GM23248 (cell line): ENCODE measurements at regions of chr17 and their contacts with region 1.

Region 1: DNA sequence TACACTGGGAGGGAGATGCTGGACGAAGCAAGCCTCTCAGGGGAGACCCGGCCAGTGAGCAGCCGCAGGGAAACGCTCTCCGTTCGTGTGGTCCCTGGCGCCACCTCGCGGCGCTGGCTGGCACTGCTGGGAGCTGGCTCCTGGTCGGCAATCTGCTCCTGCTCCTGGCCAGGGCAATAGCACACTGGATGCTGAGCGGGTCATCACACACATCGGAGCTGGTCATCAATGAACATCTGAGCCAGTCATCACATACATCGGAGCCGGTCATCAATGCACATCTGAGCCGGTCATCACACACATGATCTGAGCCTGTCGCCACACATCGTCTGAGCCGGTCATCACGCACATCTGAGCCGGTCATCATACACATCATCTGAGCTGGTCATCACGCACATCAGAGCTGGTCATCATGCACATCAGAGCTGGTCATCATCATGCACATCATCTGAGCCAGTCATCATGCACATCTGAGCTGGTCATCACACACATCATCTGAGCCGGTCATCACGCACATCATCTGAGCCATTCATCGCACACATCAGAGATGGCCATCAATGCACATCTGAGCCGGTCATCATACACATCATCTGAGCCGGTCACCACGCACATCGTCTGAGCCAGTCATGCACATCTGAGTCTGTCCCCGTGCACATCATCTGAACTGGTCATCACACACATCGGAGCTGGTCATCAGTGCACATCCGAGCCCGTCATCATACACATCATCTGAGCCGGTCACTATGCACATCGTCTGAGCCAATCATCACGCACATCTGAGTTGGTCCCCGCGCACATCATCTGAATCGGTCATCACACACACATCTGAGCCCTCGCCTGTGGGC is 217.3 kb downstream of the RBFOX3 start:
- DNase-seq: peak; percentile 77
- H3K4me3 ChIP-seq: no peak overlapping the region
- H3K27ac ChIP-seq: no peak overlapping the region
- H3K4me1 ChIP-seq: no peaks in the 10 kb centered on the region
- H3K27me3 ChIP-seq: peaks cover 51% of the 10 kb centered on the region

Region 2: GRCh38 chr17:79090443-79091225 is 302.9 kb before region 1 on chr17:
- in situ Hi-C with region 1: loop called (anchors 10 kb)
- DNase-seq: peak; percentile 44
- H3K4me3 ChIP-seq: no peak overlapping the region
- H3K27ac ChIP-seq: no peak overlapping the region
- H3K4me1 ChIP-seq: no peaks in the 10 kb centered on the region
- H3K27me3 ChIP-seq: no peaks in the 10 kb centered on the region